ENCODE measurements at regions of chr10 and their contacts with region 1.

Region 1: DNA sequence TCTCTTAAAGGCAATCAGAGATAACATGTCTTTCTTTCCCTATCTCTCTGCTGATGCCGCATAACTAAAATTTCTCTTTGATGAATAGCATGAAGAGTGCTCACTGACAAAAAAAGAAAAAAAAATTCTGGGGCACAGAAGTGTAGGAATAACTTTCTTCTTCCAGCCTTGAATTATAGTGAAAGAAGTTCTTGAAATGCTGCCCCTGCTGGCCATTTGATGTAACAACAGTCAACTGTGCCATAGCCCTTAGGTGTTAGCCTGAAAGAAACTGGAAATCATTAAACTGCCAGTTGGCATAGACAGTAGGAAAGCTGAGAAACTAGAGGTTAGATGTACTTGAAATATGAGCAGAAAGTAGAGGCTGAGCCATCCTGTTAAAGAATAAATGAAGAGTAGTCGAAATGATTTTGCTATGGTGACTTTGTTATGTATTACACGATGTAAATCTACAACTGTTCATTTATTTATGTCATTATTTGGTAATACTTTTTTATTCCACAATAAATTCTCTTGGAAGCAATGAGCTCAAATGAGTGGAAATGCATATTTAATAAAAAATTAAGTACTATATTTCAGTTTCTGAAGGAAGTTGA is 48.3 kb upstream of the FAM171A1 start:
- DNase-seq: no peak
- H3K4me3 ChIP-seq: no peak overlapping the region
- H3K27ac ChIP-seq: no peak overlapping the region
- H3K4me1 ChIP-seq: no peaks in the 10 kb centered on the region
- H3K27me3 ChIP-seq: no peaks in the 10 kb centered on the region
- CTCF ChIP-seq: peak; percentile 67 to 89 (median 73)
- EP300 ChIP-seq: no peak
- POLR2A ChIP-seq: no peak

Region 2: DNA sequence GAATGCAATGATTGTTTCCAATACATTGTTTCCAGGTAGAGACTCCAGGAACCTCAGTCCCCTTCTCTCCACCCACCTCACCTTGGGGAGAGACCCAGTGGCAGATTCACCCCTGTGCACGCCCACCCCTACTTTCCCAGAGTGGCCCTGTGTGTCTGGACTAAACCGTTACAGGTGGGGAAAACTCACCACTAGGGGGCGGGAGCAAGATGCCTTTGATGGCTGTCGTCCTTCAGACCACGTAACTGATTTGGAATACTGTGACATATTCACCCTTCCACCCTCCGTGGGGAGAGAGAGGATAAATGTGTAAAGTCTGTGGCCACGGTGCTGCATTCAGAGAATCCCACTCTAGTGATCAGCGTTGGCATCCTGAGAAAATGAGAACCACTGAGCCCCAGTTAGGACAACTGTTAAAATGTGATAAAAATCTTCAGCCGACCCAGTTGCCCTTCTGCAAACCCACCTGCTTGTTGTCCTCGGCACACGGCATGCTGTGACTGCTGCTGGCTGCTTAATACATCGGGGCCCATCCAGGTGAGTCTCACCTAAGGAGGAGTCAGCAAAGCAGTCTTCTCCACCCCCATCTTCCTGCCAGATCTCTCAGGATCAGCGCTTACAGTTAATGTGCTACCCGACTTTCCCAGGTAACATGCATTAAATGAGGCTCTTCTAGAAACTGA is 209.4 kb before region 1 on chr10:
- intact Hi-C with region 1: loop called (anchors 2 kb)
- DNase-seq: peak; percentile 95
- H3K4me3 ChIP-seq: peak overlapping the region in 1 of 4 donors; percentile 28
- H3K27ac ChIP-seq: no peak overlapping the region
- H3K4me1 ChIP-seq: peaks cover 5 to 9% (median 6%) of the 10 kb centered on the region in 4 donors
- H3K27me3 ChIP-seq: no peaks in the 10 kb centered on the region
- CTCF ChIP-seq: peak; percentile 72 to 88 (median 81)
- EP300 ChIP-seq: no peak
- POLR2A ChIP-seq: no peak

Region 3: DNA sequence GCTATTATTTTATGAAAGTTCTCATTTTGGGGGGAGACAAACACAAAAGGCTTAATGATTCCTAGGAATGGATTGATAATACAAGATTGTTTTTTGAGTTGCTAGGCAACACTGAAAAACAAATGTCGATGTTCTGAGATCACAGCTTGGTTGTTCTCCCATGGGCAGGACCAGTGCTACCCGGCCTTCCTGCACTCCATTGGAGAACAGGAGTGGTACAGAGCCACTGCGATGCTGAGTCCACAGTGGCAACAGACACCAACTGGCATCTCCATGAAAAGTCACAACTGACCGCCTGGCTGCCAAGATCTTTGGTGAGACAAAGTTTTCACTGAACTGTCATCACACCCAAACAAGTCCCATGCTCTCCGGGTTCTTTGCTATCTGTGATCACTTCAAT is 182.0 kb before region 1 on chr10:
- intact Hi-C with region 1: no loop called
- DNase-seq: no peak
- H3K4me3 ChIP-seq: no peak overlapping the region
- H3K27ac ChIP-seq: peak overlapping the region; percentile 23 to 54 (median 36)
- H3K4me1 ChIP-seq: peaks cover 0 to 28% (median 12%) of the 10 kb centered on the region in 4 donors
- H3K27me3 ChIP-seq: no peaks in the 10 kb centered on the region
- CTCF ChIP-seq: no peak
- EP300 ChIP-seq: no peak
- POLR2A ChIP-seq: no peak

Region 4: DNA sequence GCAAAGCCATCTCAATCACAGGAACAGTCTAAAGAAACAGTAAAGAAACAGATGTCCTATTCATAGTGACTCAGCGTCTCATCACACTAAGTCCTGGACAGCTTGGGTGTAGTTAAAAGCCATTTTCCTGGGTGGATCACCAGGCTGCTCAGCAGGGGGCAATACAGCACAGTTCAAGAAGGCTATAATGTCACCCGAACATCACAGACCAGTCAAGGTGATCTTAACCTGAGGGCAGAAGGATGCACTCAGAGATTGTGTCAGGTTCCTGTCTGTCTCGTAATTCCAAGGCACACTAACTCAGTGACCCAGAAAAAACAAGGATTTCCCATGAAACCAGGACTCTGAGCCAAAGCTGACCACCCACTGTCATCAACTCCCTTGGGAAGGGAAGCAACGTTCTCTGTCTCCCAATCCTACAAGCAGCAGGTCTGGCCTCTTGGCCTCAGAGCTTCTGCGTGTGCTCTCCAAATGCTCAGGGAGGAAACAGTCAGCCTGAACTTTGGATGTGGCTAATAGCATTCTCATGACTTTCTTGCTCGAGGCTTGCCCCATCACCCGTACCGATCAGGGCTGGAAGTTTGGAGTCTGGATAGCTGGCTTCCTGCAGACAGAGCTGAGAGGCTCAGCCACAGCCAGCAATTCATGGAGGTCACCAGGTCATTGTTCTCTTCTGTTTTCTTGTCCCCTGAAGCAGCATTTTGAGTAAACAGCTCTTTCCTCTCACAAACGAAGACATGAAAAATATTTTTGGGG is 42.2 kb after region 1 on chr10:
- intact Hi-C with region 1: no loop called
- DNase-seq: no peak
- H3K4me3 ChIP-seq: no peak overlapping the region
- H3K27ac ChIP-seq: no peak overlapping the region
- H3K4me1 ChIP-seq: peaks cover 0 to 5% (median 0%) of the 10 kb centered on the region in 4 donors
- H3K27me3 ChIP-seq: peaks cover 0 to 4% (median 0%) of the 10 kb centered on the region in 4 donors
- CTCF ChIP-seq: peak in 2 of 3 experiments; percentile 13 to 17
- EP300 ChIP-seq: no peak
- POLR2A ChIP-seq: no peak